ENCODE measurements at regions of chr4 and their contacts with region 1.

Region 1: GRCh38 chr4:42371306-42372252 is 25.7 kb upstream of the SHISA3 start:
- DNase-seq: peak; percentile 55
- CTCF ChIP-seq: peak; percentile 51

Region 2: DNA sequence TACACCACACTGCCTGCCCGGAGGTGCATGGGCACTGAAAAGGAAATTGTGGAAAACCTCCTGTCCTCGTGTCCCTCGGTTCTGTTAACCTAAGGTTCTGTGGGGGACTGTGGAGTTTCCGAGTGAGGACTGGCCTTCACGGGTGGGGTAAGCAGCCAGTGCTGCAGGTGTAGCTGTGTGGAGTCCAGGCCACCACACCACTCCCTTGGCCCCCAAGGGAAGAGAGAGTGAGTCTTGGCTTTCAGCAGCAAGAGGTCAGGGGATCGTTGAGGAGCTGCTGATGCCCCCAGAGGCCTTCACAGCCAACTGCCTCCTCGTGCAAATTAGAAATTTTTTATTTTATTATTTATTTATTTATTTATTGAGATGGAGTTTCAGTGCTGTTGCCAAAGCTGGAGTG is 239.5 kb before region 1 on chr4:
- CTCF ChIA-PET with region 1: no interaction called
- POLR2A ChIA-PET with region 1: no interaction called
- DNase-seq: no peak
- CTCF ChIP-seq: no peak

Region 3: GRCh38 chr4:42350611-42351182 is 20.9 kb before region 1 on chr4:
- CTCF ChIA-PET with region 1: interaction called, 19 read pairs
- POLR2A ChIA-PET with region 1: no interaction called
- DNase-seq: peak; percentile 31
- CTCF ChIP-seq: no peak

Region 4: GRCh38 chr4:42385516-42385915 is 13.9 kb after region 1 on chr4:
- CTCF ChIA-PET with region 1: interaction called, 15 read pairs
- POLR2A ChIA-PET with region 1: no interaction called
- DNase-seq: no peak
- CTCF ChIP-seq: no peak

Region 5: DNA sequence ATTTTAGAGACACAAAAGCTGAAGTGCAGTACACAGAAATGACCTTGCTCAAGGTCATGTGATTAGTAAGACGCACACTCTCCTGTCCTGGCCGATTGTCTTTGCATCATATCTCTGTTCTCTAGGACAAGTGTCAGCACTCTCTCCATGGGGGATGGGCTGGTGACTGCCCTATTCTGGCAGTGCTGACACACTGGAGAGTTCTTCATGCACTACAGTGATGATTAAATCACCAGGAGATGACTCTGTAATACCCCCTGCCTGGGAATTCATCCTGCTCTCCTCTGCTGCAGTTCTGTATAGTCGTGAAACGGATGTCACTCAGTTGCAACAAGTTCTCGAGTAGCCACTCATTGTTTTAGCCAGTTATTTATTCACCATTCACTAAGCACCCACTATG is 20.4 kb after region 1 on chr4:
- CTCF ChIA-PET with region 1: interaction called, 14 read pairs
- POLR2A ChIA-PET with region 1: no interaction called
- DNase-seq: no peak
- CTCF ChIP-seq: no peak

Region 6: GRCh38 chr4:43560047-43560446 is 1188.5 kb after region 1 on chr4:
- CTCF ChIA-PET with region 1: no interaction called
- POLR2A ChIA-PET with region 1: no interaction called
- DNase-seq: no peak
- CTCF ChIP-seq: no peak

Measured in GM10248 (cell line).